AG04449 (cell line): ENCODE measurements at regions of chr2 and their contacts with region 1.

Region 1: DNA sequence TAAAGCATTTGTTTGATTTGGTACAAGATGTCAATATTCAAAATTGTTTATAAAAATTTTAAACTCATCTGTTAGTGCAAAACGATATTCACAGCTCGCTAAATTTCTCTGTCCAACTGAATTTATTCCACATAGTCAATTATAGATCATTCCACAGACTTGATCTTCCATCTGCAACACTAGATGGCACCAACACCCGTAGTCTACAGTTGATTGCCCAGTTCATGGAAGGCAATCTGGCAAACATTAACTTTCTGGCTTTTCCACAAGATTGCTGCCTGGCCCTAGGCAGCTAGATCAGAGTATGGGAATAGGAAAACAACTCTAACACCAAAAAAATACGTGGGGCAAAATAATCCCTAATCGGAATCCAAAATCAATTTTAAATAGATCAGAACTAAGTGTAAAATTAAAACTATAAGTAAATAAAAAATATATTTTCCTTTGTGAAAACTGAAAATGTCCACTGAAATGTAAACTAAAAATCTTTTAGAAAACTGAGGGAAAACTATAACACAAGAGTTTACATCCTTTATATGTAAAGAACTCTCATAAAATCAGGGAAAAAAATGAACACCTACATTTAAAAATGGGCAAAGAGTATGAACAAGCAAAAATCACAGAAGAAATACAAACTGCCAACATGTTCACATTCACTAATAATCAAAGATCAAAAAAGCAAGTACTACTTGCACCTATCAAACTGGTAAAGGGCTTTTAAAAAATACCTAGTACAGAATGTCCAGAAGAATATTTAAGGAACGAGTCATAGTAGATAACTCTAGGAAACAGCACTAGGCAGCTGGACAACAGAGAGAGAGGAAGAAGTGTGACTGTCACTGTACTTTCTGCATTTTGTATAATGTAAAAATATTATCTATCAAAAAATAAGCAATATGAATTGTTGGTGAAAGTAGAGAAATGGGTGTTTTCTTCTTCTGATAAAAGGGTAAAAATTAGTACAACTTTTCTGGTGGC is 35.0 kb downstream of the RTN4 start:
- DNase-seq: no peak
- H3K4me3 ChIP-seq: no peak overlapping the region
- CTCF ChIP-seq: peak; percentile 58

Region 2: GRCh38 chr2:54634564-54635511 is 380.4 kb before region 1 on chr2:
- CTCF ChIA-PET with region 1: no interaction called
- POLR2A ChIA-PET with region 1: no interaction called
- DNase-seq: no peak
- H3K4me3 ChIP-seq: peak overlapping the region; percentile 32
- CTCF ChIP-seq: no peak

Region 3: GRCh38 chr2:55175254-55176025 is 160.2 kb after region 1 on chr2:
- CTCF ChIA-PET with region 1: interaction called, 109 read pairs
- POLR2A ChIA-PET with region 1: no interaction called
- DNase-seq: no peak
- H3K4me3 ChIP-seq: no peak overlapping the region
- CTCF ChIP-seq: peak; percentile 40